ENCODE measurements at regions of chr2 and their contacts with region 1.

Region 1: GRCh38 chr2:28406276-28407096 is 13.8 kb downstream of the FOSL2 start:
- DNase-seq: peak in 11 of 14 experiments; percentile 27 to 90 (median 62)
- ATAC-seq: peak; percentile 57
- H3K4me3 ChIP-seq: no peak overlapping the region
- H3K4me3 Mint-ChIP-seq: peak overlapping the region; percentile 60
- H3K27ac ChIP-seq: peak overlapping the region in 1 of 2 donors; percentile 75
- H3K27ac Mint-ChIP-seq: peak overlapping the region; percentile 90
- H3K4me1 ChIP-seq: peaks cover 90% of the 10 kb centered on the region
- H3K4me1 Mint-ChIP-seq: peaks cover 78% of the 10 kb centered on the region
- H3K27me3 ChIP-seq: no peaks in the 10 kb centered on the region
- H3K27me3 Mint-ChIP-seq: no peaks in the 10 kb centered on the region
- CTCF ChIP-seq: no peak

Region 2: DNA sequence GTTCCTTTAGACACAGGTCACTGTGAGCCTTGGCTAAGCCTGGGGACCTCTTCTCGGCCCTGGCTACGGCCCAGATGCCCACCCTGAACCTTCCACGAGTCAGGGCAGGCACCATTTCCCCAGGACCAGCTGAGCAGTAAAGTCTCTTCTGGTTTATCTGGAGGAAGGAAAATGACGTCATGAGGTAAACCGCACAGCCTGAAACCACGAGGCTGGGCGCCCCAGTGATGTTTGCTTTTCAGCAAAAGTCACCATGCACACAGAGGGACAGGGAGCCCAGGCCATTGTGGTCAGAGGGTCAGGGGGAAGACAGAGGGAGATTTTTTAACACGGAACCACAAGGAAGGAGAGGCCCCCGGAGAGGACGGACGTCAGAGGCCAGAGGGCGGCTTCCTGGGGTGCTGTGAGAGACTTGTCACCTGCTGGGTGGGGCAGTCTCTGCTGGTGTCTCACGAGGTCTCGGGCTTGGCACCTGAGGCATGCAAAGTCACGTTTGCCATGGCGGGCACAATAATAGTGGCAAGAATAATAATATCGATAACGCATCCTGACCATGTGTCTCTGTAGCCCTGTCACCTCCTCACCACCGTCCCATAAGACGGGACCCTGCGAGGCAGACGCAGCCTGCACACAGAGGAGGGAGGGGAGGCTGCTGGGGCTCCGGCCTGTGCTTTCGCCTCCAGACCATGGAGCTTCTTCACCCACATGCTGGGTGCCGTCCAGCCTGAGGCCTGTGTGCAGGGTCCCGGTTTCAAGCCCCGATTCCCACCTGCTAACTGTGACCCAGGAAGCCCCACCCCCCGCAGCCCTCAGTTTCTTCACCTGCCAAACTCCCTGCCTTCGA is 47.0 kb before region 1 on chr2:
- CTCF ChIA-PET with region 1: no interaction called
- POLR2A ChIA-PET with region 1: no interaction called
- intact Hi-C with region 1: loop called in 1 of 2 experiments (anchors 5 kb)
- DNase-seq: peak; percentile 54 to 94 (median 72)
- ATAC-seq: peak; percentile 84
- H3K4me3 ChIP-seq: peak overlapping the region; percentile 19
- H3K4me3 Mint-ChIP-seq: peak overlapping the region; percentile 91
- H3K27ac ChIP-seq: peak overlapping the region in 1 of 2 donors; percentile 44
- H3K27ac Mint-ChIP-seq: peak overlapping the region; percentile 89
- H3K4me1 ChIP-seq: peaks cover 84% of the 10 kb centered on the region
- H3K4me1 Mint-ChIP-seq: peaks cover 53% of the 10 kb centered on the region
- H3K27me3 ChIP-seq: no peaks in the 10 kb centered on the region
- H3K27me3 Mint-ChIP-seq: peaks cover 4% of the 10 kb centered on the region
- CTCF ChIP-seq: no peak

Region 3: DNA sequence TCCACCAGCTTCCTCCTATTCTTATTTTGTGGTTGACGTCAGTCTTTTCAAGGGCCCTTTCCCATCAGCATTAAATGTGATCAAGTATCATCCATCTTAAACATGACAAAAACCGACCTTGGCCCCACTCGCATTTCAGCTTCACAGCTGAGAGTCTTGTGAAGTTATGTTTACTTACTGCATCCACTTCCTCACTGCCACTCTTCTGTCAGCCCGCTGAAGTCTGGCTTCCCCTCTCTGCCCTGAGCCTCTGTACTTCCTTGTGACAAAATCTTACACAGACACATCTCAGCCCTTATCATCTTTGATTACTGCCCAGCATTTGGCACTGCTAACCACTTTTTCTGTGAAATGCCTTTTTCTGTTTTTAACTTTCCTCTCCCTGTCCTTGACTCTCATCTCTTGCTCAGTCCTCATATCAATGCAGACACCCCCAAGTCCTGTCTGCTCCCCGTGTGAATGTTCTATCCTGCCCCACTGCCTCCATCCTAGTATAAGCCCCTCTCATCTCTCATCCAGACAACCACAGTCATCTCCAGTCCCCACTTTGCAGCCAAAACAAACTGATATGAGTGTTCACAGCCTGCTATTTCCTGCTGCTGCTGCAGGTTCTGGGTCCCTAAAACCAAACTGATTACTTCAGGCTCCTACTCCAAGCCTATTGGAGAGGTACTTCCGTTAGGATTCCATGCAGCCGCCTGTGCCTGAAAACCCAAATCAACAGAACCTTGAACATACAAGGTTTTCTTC is 17.5 kb after region 1 on chr2:
- CTCF ChIA-PET with region 1: no interaction called
- POLR2A ChIA-PET with region 1: interaction called, 10 read pairs
- intact Hi-C with region 1: loop called in 1 of 2 experiments (anchors 1 kb)
- DNase-seq: peak in 13 of 14 experiments; percentile 17 to 72 (median 48)
- ATAC-seq: peak; percentile 91
- H3K4me3 ChIP-seq: peak overlapping the region; percentile 18
- H3K4me3 Mint-ChIP-seq: peak overlapping the region; percentile 42
- H3K27ac ChIP-seq: peak overlapping the region; percentile 52 to 67
- H3K27ac Mint-ChIP-seq: peak overlapping the region; percentile 82
- H3K4me1 ChIP-seq: peaks cover 32% of the 10 kb centered on the region
- H3K4me1 Mint-ChIP-seq: peaks cover 42% of the 10 kb centered on the region
- H3K27me3 ChIP-seq: no peaks in the 10 kb centered on the region
- H3K27me3 Mint-ChIP-seq: no peaks in the 10 kb centered on the region
- CTCF ChIP-seq: no peak

Region 4: DNA sequence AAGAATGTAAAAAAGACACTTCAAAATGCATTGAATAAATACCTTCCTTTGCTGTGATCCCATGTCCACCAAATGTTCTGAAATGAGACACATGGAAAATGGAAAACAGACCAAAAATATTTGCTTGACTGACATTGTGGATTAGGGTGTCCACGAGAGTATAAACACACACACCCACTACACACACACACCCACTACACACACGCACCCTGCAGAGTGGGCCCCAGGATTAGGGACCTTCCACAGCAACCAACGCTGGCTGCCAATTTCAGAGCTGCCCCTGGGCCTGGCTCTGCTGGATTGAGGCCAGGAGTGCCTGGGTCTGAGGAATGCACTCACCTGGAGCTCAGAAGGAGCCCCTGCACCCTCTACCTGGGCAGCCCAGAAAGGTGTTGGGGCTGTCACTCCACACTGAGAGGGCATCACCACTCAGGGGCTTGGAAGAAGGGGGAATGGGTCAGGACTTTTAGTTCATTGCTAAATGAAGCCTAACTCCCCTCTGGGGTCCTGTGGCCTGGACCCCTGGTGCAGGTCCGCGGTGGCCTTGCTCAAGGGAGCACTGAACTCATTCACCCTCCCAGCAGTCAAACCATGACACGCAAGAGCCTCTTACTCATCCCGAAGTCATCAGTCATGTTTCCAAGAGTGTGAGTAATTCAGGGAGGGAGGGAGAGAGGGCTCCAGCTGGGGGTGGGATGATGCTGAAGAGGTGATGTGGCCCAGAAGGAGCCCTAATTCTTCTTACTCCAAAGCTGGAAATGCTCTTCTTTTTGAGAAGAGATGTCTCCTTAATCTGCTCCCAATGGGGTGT is 39.2 kb after region 1 on chr2:
- CTCF ChIA-PET with region 1: no interaction called
- POLR2A ChIA-PET with region 1: no interaction called
- intact Hi-C with region 1: loop called (anchors 5 kb)
- DNase-seq: peak in 2 of 14 experiments; percentile 48 to 66
- ATAC-seq: no peak
- H3K4me3 ChIP-seq: no peak overlapping the region
- H3K4me3 Mint-ChIP-seq: no peak overlapping the region
- H3K27ac ChIP-seq: no peak overlapping the region
- H3K27ac Mint-ChIP-seq: no peak overlapping the region
- H3K4me1 ChIP-seq: peaks cover 3% of the 10 kb centered on the region
- H3K4me1 Mint-ChIP-seq: no peaks in the 10 kb centered on the region
- H3K27me3 ChIP-seq: no peaks in the 10 kb centered on the region
- H3K27me3 Mint-ChIP-seq: no peaks in the 10 kb centered on the region
- CTCF ChIP-seq: no peak

Region 5: GRCh38 chr2:29196792-29197788 is 790.6 kb after region 1 on chr2:
- CTCF ChIA-PET with region 1: no interaction called
- POLR2A ChIA-PET with region 1: no interaction called
- intact Hi-C with region 1: no loop called
- DNase-seq: peak; percentile 64 to 85 (median 73)
- ATAC-seq: peak; percentile 97
- H3K4me3 ChIP-seq: no peak overlapping the region
- H3K4me3 Mint-ChIP-seq: no peak overlapping the region
- H3K27ac ChIP-seq: no peak overlapping the region
- H3K27ac Mint-ChIP-seq: no peak overlapping the region
- H3K4me1 ChIP-seq: peaks cover 3% of the 10 kb centered on the region
- H3K4me1 Mint-ChIP-seq: peaks cover 5% of the 10 kb centered on the region
- H3K27me3 ChIP-seq: no peaks in the 10 kb centered on the region
- H3K27me3 Mint-ChIP-seq: no peaks in the 10 kb centered on the region
- CTCF ChIP-seq: peak; percentile 95